Activated naive CD4-positive, alpha-beta T cell treated with anti-CD3 and anti-CD28 coated beads for 36 hours (primary cell): ENCODE measurements at regions of chr1 and their contacts with region 1.

Region 1: DNA sequence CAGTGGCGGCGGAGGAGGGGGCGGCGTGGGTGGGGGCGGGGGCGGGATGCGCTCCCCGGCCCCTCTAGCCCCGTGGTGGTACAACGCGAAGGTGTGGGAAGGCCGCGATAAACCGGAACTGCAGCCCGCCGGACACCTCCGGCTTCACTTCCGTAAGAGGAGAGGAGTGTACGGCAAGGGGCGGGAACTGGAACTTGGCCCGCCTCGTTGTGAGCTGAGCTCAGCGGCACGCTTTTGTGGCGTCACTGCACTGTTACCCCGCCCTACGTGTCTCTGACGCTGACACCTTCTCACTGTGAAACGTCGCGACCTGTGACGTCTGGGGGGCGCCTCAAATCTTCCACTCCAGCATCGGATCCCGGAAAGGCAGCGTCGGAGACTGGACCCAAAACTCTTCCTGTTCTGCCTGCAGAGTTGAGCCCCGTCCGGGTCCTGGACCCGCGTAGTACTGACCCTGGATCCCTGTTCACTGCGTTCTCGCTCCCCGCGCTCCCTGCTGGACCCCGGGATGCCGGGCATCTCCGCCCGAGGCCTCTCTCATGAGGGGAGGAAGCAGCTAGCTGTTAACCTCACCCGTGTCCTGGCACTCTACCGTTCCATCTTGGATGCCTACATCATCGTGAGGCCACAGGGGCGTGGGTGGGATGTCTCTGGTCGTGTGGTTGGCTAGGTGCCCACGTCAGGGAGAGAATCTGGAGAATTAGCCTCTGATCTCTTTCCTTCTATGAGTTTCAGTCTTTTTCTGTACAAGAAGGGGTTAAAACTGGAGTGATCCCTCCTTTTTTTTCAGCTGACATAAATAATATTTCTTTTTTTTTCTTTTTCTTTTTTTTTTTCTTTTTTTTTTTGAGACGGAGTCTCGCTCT is at the start of gene ISG20L2:
- DNase-seq: peak; percentile 99
- H3K4me3 Mint-ChIP-seq: no peak within 1 kb of the TSS
- H3K27ac Mint-ChIP-seq: peak within 1 kb of the TSS; percentile 98
- H3K4me1 Mint-ChIP-seq: peaks cover 27% of the 10 kb centered on the region
- H3K27me3 Mint-ChIP-seq: no peaks in the 10 kb centered on the region
- total RNA-seq, gene ISG20L2: 24.8 to 28.7 TPM

Region 2: DNA sequence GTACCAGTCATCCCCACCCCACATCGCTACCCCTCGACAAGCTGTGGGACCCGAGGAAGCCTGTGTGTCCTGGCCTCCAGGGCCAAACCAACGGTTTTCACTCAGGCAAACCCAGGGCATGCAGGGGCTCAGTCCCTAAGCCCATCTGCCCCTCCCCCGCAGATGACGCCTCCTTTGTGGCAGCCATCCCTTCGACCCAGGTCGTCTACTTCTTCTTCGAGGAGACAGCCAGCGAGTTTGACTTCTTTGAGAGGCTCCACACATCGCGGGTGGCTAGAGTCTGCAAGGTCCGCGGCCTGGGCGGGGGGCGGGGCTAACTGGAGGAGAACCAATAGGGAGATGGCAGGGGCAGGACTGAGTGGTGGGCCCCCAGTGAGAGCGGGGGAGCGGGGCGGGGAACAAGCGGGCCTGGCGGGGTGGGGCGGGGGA is 568.1 kb before region 1 on chr1:
- CTCF ChIA-PET with region 1: no interaction called
- intact Hi-C with region 1: no loop called
- DNase-seq: peak; percentile 73
- H3K4me3 Mint-ChIP-seq: peak overlapping the region; percentile 63
- H3K27ac Mint-ChIP-seq: peak overlapping the region; percentile 83
- H3K4me1 Mint-ChIP-seq: peaks cover 69% of the 10 kb centered on the region
- H3K27me3 Mint-ChIP-seq: no peaks in the 10 kb centered on the region

Region 3: GRCh38 chr1:156625436-156626078 is 103.3 kb before region 1 on chr1:
- CTCF ChIA-PET with region 1: interaction called, 38 read pairs
- intact Hi-C with region 1: no loop called
- DNase-seq: peak; percentile 65
- H3K4me3 Mint-ChIP-seq: peak overlapping the region; percentile 36
- H3K27ac Mint-ChIP-seq: no peak overlapping the region
- H3K4me1 Mint-ChIP-seq: peaks cover 7% of the 10 kb centered on the region
- H3K27me3 Mint-ChIP-seq: peaks cover 40% of the 10 kb centered on the region

Region 4: DNA sequence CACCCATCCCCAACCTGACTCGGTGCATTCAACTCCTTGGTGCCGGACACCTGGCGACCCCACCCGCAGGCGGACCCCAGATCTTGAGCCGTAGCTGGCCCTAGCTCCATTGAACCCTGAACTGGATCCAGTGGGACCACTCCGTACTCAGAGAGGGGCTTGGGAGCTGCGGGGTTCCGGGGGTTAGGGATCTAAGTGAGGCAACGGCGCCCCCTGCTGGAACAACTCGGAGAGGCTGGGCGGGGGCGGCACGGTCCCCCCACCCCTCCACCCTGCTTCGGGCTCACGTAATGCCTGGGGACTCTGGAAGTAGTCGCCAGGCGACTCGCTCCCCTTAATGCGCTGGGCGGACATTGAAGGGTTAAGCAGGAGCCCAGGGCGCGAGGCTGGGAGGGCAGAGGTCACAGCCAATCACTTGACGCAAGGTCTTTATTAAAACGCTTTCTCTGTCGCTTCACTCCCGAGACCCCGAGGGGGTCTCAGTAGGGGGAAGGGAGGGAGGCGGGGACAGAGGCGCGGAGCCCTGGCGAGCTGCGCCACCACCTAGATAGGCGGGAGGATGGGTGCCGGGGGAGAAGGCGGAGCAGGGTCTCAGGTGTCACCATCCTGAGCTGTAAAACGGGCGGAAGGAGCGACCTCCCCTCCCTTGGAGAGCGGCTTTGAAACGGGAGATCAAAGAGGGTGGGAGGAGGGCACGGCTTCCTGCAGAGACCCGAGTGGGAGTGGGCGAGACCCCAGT is 22.7 kb before region 1 on chr1:
- CTCF ChIA-PET with region 1: interaction called, 69 read pairs
- intact Hi-C with region 1: loop called (anchors 1 kb)
- DNase-seq: peak; percentile 77
- H3K4me3 Mint-ChIP-seq: peak overlapping the region; percentile 76
- H3K27ac Mint-ChIP-seq: peak overlapping the region; percentile 46
- H3K4me1 Mint-ChIP-seq: peaks cover 27% of the 10 kb centered on the region
- H3K27me3 Mint-ChIP-seq: peaks cover 25% of the 10 kb centered on the region

Region 5: GRCh38 chr1:156767101-156767878 is 38.5 kb after region 1 on chr1 and contains the start of gene PRCC:
- CTCF ChIA-PET with region 1: interaction called, 124 read pairs
- intact Hi-C with region 1: loop called (anchors 1 kb)
- DNase-seq: peak; percentile 99
- H3K4me3 Mint-ChIP-seq: no peak within 1 kb of the TSS
- H3K27ac Mint-ChIP-seq: no peak within 1 kb of the TSS
- H3K4me1 Mint-ChIP-seq: peaks cover 39% of the 10 kb centered on the region
- H3K27me3 Mint-ChIP-seq: no peaks in the 10 kb centered on the region
- total RNA-seq, gene PRCC: 55.2 to 55.8 TPM

Region 6: DNA sequence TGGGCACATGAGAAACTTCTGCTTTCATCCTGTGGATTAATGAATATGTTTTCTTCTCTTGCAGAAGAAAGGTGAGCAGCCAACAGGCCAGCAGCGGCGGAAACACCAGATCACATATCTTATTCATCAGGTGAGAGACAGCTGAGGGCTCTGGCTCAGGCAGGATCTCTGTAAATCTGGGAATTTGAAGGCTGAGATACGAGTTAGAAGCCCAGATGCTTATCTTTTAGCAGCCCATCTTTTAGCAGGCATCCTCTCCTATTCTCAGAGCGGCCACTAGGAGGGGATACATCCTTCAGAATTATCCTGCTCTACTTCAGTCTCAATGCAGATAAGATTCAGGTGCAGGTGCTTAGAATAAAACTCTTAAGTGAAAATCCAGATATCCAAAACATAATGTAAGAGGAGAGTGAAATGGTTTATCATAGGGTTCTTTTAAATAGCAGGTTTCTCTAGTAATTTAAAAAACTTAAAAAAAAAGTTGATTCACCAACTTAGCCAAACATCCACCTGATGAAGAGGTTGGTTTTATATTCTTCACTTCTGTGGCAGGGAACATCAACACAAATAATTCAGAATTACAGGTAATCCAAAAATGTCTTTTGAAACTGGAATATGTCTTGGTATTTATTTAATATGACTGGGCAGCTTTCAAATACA is 68.5 kb after region 1 on chr1:
- CTCF ChIA-PET with region 1: interaction called, 30 read pairs
- intact Hi-C with region 1: no loop called
- DNase-seq: peak; percentile 78
- H3K4me3 Mint-ChIP-seq: no peak overlapping the region
- H3K27ac Mint-ChIP-seq: no peak overlapping the region
- H3K4me1 Mint-ChIP-seq: no peaks in the 10 kb centered on the region
- H3K27me3 Mint-ChIP-seq: no peaks in the 10 kb centered on the region

Region 7: GRCh38 chr1:156892190-156893047 is 163.6 kb after region 1 on chr1:
- CTCF ChIA-PET with region 1: interaction called, 13 read pairs
- intact Hi-C with region 1: loop called (anchors 1 kb)
- DNase-seq: peak; percentile 92
- H3K4me3 Mint-ChIP-seq: peak overlapping the region; percentile 41
- H3K27ac Mint-ChIP-seq: no peak overlapping the region
- H3K4me1 Mint-ChIP-seq: peaks cover 11% of the 10 kb centered on the region
- H3K27me3 Mint-ChIP-seq: peaks cover 47% of the 10 kb centered on the region